ENCODE measurements at regions of chr9 and their contacts with region 1.

Region 1: DNA sequence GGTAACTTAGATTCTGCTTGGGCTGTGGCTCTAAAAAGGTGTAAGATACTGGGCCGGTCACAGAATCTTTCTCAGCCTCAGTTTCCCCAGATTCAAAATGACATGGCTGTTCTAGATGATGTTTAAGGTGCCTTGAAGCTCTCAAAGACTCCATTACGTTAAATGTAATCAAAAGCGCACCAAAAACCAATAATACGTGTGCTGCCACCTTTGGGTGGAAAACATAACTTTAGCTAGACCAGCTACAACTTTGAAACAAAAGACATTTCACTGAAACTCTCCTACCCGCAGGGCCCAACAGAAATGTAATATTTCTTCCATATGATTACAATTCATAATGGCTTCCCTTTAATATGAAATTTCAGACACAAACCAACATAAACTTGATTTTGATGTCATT is 35.0 kb upstream of the PCSK5 start:
- DNase-seq: no peak
- ATAC-seq: no peak
- H3K4me3 ChIP-seq: no peak overlapping the region
- H3K27ac ChIP-seq: no peak overlapping the region
- H3K4me1 ChIP-seq: no peaks in the 10 kb centered on the region
- H3K27me3 ChIP-seq: no peaks in the 10 kb centered on the region
- CTCF ChIP-seq: peak; percentile 31

Region 2: GRCh38 chr9:75265525-75265972 is 590.0 kb before region 1 on chr9:
- intact Hi-C with region 1: loop called (anchors 10 kb)
- DNase-seq: peak in 1 of 2 donors; percentile 13
- ATAC-seq: peak in 3 of 4 donors; percentile 53 to 59 (median 58)
- H3K4me3 ChIP-seq: no peak overlapping the region
- H3K27ac ChIP-seq: no peak overlapping the region
- H3K4me1 ChIP-seq: no peaks in the 10 kb centered on the region
- H3K27me3 ChIP-seq: peaks cover 0 to 2% (median 0%) of the 10 kb centered on the region in 3 donors
- CTCF ChIP-seq: peak; percentile 83

Region 3: DNA sequence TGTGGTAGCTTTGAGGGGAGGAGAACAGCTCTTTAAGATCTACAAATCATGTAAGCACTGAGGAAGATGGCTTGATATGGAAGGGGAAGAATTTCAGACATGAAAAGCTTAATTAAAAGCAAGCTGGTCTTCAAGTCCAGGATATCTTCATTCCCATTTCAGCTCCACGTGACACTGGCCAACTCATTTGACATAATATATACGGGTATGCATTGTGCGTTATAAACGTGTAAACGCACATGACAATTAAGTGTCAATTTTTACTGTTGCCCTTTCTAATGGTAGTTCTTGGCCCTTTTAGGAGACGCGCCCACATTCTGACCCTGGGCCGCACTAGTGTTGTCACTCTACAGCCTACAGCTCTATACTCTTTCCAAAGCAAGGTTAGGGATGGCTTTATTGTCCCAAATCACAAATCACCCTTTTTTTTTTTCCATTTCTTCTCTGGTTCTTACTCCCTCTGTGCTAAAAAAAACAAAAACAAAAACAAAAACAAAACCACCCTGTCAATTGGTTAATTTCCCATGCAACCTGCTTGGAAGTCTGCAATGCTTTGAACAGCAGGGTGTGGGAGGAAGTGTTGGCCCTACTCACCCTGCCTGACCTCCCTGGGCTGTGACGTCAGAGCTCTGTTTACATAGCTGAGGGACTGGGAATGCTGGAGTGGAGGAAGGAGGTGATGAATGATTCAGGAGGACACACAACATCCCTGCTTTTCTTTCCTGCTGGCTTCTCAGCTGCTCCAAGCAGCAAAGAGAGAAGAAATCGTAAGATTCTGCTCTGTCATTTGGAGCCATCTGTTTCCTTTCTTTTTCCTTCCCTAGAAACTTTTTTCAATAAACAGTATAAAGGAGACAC is 519.4 kb after region 1 on chr9:
- intact Hi-C with region 1: no loop called
- DNase-seq: peak; percentile 66 to 80
- ATAC-seq: peak in 3 of 4 donors; percentile 48 to 69 (median 68)
- H3K4me3 ChIP-seq: no peak overlapping the region
- H3K27ac ChIP-seq: no peak overlapping the region
- H3K4me1 ChIP-seq: no peaks in the 10 kb centered on the region
- H3K27me3 ChIP-seq: no peaks in the 10 kb centered on the region
- CTCF ChIP-seq: no peak

Measured in psoas muscle (tissue), 8 donors.